ENCODE measurements at regions of chr17 and their contacts with region 1.

Region 1: DNA sequence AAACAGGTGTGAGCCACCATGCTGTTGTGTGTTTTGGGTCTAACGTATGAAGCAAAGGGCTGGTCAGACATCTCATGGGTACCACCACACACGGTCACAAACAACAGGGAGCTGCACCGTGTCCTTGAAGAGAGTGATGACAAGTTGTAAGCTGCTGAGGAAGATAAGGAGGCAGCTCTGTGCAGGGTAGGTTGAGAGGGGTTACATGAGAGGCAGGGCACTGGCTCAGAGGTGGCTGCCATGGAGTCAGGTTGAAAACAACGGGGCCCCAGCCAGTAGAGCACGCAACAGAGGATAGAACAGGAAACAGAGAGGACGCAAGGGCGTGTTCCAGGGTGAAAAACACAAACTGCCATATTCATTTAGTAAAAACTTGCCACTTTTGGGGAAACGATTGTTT is 52.2 kb downstream of the TRARG1 start:
- DNase-seq: peak in 3 of 9 experiments; percentile 15 to 42 (median 27)
- ATAC-seq: peak; percentile 81
- H3K4me3 ChIP-seq: no peak overlapping the region
- H3K4me3 Mint-ChIP-seq: no peak overlapping the region
- H3K27ac ChIP-seq: no peak overlapping the region
- H3K27ac Mint-ChIP-seq: peak overlapping the region; percentile 5
- H3K4me1 ChIP-seq: peaks cover 5% of the 10 kb centered on the region
- H3K4me1 Mint-ChIP-seq: peaks cover 11% of the 10 kb centered on the region
- H3K27me3 ChIP-seq: no peaks in the 10 kb centered on the region
- H3K27me3 Mint-ChIP-seq: no peaks in the 10 kb centered on the region
- CTCF ChIP-seq: no peak

Region 2: DNA sequence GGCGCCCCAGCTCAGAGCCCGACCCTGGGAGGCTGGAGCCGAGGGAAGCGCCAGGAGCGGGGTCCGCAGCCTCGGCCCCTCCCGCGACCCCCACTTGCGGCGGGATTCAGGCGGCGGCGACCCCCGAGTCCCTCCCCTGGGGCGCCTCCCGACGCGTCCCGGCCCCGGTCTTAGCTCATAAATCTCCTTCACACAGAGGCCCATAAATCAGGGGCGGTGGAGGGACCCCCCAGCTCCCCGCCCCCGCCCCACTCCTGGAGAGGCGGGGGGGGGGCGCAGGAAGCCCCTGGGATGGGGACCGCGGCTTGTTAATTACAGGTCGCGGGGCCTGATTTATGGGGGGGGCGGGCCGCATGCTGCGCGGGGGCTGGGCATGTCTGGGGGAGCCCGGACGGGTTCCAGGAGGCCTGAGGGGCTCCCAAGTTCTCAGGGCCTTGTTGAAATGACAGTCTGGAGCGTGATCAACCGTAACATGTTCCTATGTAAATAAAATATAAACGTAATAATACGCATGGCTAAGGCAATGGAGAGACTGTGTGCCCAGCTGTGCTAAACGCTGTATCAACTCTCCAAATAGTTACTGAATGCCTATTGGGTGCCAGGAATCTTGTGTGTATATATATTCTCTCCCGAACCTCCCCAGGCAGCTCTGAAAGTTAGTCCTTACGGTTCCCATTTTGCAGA is 71.5 kb before region 1 on chr17:
- CTCF ChIA-PET with region 1: interaction called, 59 read pairs
- POLR2A ChIA-PET with region 1: interaction called, 4 read pairs
- intact Hi-C with region 1: loop called (anchors 1 kb)
- DNase-seq: no peak
- ATAC-seq: no peak
- H3K4me3 ChIP-seq: peak overlapping the region in 1 of 2 experiments; percentile 49
- H3K4me3 Mint-ChIP-seq: peak overlapping the region; percentile 49
- H3K27ac ChIP-seq: no peak overlapping the region
- H3K27ac Mint-ChIP-seq: no peak overlapping the region
- H3K4me1 ChIP-seq: peaks cover 24% of the 10 kb centered on the region
- H3K4me1 Mint-ChIP-seq: peaks cover 31% of the 10 kb centered on the region
- H3K27me3 ChIP-seq: peaks cover 0 to 6% of the 10 kb centered on the region in 2 experiments
- H3K27me3 Mint-ChIP-seq: peaks cover 18% of the 10 kb centered on the region
- CTCF ChIP-seq: no peak

Region 3: GRCh38 chr17:1275962-1276736 is 55.6 kb before region 1 on chr17:
- CTCF ChIA-PET with region 1: interaction called, 20 read pairs
- POLR2A ChIA-PET with region 1: no interaction called
- intact Hi-C with region 1: loop called in 1 of 2 experiments (anchors 1 kb)
- DNase-seq: peak; percentile 49 to 84 (median 79)
- ATAC-seq: peak; percentile 90
- H3K4me3 ChIP-seq: no peak overlapping the region
- H3K4me3 Mint-ChIP-seq: no peak overlapping the region
- H3K27ac ChIP-seq: no peak overlapping the region
- H3K27ac Mint-ChIP-seq: no peak overlapping the region
- H3K4me1 ChIP-seq: no peaks in the 10 kb centered on the region
- H3K4me1 Mint-ChIP-seq: peaks cover 8% of the 10 kb centered on the region
- H3K27me3 ChIP-seq: no peaks in the 10 kb centered on the region
- H3K27me3 Mint-ChIP-seq: peaks cover 32% of the 10 kb centered on the region
- CTCF ChIP-seq: peak; percentile 88

Region 4: GRCh38 chr17:1347589-1348323 is 16.0 kb after region 1 on chr17:
- CTCF ChIA-PET with region 1: interaction called, 10 read pairs
- POLR2A ChIA-PET with region 1: no interaction called
- intact Hi-C with region 1: no loop called
- DNase-seq: peak in 1 of 9 experiments; percentile 38
- ATAC-seq: no peak
- H3K4me3 ChIP-seq: no peak overlapping the region
- H3K4me3 Mint-ChIP-seq: peak overlapping the region; percentile 68
- H3K27ac ChIP-seq: peak overlapping the region in 1 of 2 experiments; percentile 49
- H3K27ac Mint-ChIP-seq: peak overlapping the region; percentile 83
- H3K4me1 ChIP-seq: peaks cover 8% of the 10 kb centered on the region
- H3K4me1 Mint-ChIP-seq: peaks cover 30% of the 10 kb centered on the region
- H3K27me3 ChIP-seq: no peaks in the 10 kb centered on the region
- H3K27me3 Mint-ChIP-seq: no peaks in the 10 kb centered on the region
- CTCF ChIP-seq: no peak

Measured in CD8-positive, alpha-beta T cell (primary cell).